Lower leg skin (tissue), 4 donors: ENCODE measurements at regions of chr9 and their contacts with region 1.

Region 1: GRCh38 chr9:113463418-113464285 is at the start of gene RGS3:
- DNase-seq: no peak
- H3K4me3 ChIP-seq: no peak within 1 kb of the TSS
- CTCF ChIP-seq: no peak
- POLR2A ChIP-seq: no peak
- total RNA-seq, gene RGS3: 10.5 to 18.2 (median 12.8) TPM

Region 2: DNA sequence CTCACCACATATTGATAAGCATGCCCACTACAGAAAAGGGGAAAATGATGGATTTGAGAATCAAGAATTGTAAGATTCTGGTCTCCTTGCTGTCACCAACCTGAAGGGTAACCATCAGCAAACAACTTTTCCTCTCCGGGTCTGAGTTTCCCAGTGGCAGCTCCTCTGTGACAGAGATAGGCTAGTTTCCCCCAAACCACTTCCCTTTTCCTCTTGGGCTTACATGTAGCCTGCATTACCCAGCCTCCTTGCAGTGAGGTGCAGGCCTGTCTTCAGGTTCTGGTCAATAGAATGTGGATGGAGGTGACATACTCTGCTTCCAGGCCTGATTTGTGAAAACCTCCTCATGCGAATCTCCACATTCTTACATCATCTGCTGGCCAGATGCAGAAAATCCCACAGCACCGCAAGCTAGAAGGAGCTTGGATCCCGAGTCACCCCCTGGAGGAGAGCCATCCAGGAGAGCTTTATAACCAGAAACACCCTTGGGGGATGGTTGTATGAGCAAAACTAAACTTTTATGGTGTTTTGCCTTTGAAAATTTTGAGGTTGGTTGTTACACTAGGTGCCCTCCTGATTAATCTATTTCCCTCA is 206.0 kb after region 1 on chr9:
- intact Hi-C with region 1: loop called (anchors 5 kb)
- DNase-seq: no peak
- H3K4me3 ChIP-seq: no peak overlapping the region
- CTCF ChIP-seq: no peak
- POLR2A ChIP-seq: no peak